WTC11 (cell line): ENCODE measurements at regions of chr18 and their contacts with region 1.

Region 1: GRCh38 chr18:48859311-48860268 is 91.2 kb downstream of the SMAD7 start:
- DNase-seq: peak; percentile 49
- ATAC-seq: peak; percentile 21
- H3K4me3 Mint-ChIP-seq: peak overlapping the region; percentile 33; the same call in 1 of the 2 replicates
- H3K27ac Mint-ChIP-seq: no peak overlapping the region
- H3K4me1 Mint-ChIP-seq: peaks cover 35% of the 10 kb centered on the region
- H3K27me3 Mint-ChIP-seq: no peaks in the 10 kb centered on the region
- CTCF ChIP-seq: no peak

Region 2: GRCh38 chr18:48827291-48828193 is 32.0 kb before region 1 on chr18:
- CTCF ChIA-PET with region 1: interaction called, 14 read pairs
- POLR2A ChIA-PET with region 1: interaction called, 8 read pairs
- DNase-seq: peak; percentile 59
- ATAC-seq: peak; percentile 78
- H3K4me3 Mint-ChIP-seq: peak overlapping the region; percentile 61
- H3K27ac Mint-ChIP-seq: peak overlapping the region; percentile 85
- H3K4me1 Mint-ChIP-seq: peaks cover 58% of the 10 kb centered on the region
- H3K27me3 Mint-ChIP-seq: peaks cover 4% of the 10 kb centered on the region; the same call in 1 of the 2 replicates
- CTCF ChIP-seq: no peak

Region 3: DNA sequence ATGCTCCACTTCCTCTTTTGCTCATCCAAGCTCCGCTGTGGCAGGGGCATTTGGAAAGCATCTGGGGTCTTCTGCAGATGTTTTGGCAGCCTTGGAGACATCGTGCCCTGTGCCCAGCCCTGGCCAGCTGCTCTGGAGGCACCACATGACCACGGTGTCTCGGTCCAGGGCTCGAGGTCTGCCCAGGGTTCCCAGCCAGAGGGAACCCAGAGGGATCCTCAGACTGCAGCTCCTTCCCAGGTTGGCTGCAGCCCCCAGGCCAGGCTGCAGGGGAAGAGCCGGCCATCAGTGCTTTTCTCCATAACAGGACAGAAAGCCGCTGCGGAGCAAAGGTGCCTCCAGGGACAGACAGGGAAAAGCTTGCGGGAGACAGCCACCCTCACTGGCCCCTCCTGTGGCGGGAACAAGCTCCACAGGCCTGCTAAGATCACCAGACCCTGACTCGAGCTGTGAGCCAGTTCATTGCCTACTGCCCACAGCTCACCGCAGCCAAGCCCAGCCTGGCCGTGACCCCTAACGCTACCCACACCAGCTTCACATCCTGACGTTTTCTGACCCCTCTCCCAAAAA is 16.4 kb after region 1 on chr18:
- CTCF ChIA-PET with region 1: interaction called, 11 read pairs
- POLR2A ChIA-PET with region 1: no interaction called
- DNase-seq: peak; percentile 45
- ATAC-seq: peak; percentile 68
- H3K4me3 Mint-ChIP-seq: no peak overlapping the region
- H3K27ac Mint-ChIP-seq: no peak overlapping the region; the same call in 1 of the 2 replicates
- H3K4me1 Mint-ChIP-seq: peaks cover 29% of the 10 kb centered on the region
- H3K27me3 Mint-ChIP-seq: peaks cover 5% of the 10 kb centered on the region
- CTCF ChIP-seq: no peak